ENCODE measurements at regions of chr7 and their contacts with region 1.

Region 1: GRCh38 chr7:73851410-73852234 is 9.3 kb upstream of the METTL27 start:
- DNase-seq: no peak

Region 2: DNA sequence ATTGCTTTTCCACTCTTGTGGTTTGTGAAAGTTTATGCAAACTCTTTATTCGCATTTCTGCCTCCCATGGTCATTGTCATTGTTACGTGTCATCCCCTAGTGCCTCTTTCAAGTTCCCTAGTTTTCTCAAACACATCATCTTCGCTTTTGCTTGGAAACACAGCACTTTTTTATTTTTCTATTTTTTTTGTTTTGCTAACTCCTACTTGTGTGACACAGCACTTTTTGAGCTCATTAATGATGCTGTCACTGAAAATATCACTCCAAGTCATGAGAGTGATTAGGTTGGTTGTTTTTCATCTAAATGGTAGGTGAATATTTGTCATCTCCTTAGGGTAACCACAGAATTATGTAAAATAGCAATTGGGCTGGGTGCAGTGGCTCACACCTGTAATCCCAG is 123.7 kb before region 1 on chr7:
- CTCF ChIA-PET with region 1: no interaction called
- POLR2A ChIA-PET with region 1: no interaction called
- DNase-seq: no peak

Region 3: DNA sequence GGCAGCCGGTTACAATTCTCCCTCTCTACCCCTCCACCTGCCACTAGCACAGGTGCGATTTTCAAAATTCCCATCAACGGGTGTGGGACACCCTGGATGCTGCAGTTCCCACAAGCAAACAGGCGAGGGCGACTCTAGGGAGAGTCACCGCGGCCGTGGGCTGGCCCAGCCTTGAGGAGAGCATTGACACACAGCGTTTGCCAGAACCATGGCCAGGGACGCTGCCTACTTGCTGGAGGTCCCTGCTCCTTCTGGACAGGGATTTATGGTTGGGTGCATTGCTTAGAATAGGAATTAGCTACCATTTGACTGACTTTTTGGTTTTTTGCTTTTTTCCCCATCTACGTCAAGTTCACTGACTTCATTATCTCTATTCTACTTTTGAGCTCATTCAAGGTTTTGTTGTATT is 39.9 kb before region 1 on chr7:
- CTCF ChIA-PET with region 1: interaction called, 10 read pairs
- POLR2A ChIA-PET with region 1: interaction called, 3 read pairs
- DNase-seq: peak; percentile 82

Region 4: GRCh38 chr7:73865738-73866445 is 14.3 kb after region 1 on chr7:
- CTCF ChIA-PET with region 1: no interaction called
- POLR2A ChIA-PET with region 1: no interaction called
- DNase-seq: no peak

Measured in HEK293T (cell line).